PC-3 (cell line): ENCODE measurements at regions of chr14 and their contacts with region 1.

Region 1: DNA sequence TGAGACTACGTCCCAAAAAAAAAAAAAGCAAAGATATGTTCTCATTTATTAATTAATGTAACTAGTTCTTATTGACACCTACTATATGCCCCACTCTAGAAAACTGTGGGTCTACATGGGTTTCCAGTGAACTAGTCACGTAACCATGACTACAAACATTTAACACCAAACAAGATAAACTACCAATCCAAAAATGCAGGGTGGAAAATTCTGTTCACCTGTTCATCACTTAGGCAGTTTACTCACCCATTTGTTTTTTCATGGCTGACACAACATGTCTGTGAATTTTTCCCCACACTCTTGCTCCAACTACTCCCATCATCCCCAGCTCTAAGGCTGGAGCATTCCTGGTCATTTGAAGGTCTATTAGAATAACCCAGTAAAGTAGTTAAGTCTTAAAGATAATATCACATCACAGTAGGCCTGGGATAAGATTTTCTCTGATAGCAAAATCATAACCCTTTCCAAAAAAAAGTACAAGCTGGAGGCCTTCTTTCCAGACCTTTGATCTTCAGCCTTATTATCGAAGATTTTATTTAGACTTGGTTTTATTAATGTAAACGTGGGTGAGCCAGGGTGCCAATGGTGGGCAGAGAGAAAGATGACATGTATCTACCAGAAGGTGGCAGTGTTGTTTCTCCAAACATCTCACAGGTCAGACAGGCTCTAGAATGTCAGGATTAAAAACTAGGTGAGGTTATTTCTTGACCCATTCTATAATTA is 61.6 kb upstream of the DAAM1 start:
- DNase-seq: peak; percentile 95
- ATAC-seq: peak; percentile 94
- H3K4me3 ChIP-seq: no peak overlapping the region
- H3K27ac ChIP-seq: no peak overlapping the region
- H3K4me1 ChIP-seq: no peaks in the 10 kb centered on the region
- H3K27me3 ChIP-seq: peaks cover 4% of the 10 kb centered on the region; the same call in 1 of the 2 replicates
- CTCF ChIP-seq: peak; percentile 100

Region 2: DNA sequence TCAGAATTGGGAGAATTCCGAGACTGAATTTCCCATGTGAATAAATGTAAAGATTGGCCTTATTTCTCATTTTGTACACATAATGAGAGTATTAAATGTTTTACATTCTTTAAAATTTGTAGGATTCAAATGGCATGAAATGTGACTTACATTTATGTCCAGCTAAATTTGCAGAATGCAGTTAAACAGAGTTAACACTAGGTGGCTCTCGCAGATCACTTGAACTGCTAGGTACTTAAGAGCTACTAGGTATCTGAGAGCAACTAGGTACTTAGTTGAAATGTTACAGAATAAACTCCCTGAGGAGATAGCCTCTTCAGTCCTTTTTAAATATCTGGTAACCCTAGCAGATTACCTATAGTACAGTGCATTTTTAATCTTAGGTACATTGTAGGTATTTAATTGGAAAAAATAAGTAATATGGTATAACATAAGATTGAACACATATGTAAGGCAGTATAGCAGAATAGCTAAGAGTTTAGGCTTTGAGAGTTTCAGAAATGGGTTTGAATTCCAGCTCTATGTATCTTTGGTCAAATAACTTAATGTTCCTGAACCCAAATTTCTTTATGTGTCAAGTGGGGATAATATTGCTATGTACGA is 625.6 kb before region 1 on chr14:
- CTCF ChIA-PET with region 1: interaction called, 4 read pairs
- POLR2A ChIA-PET with region 1: no interaction called
- intact Hi-C with region 1: loop called (anchors 1 kb)
- DNase-seq: peak; percentile 97
- ATAC-seq: peak; percentile 99
- H3K4me3 ChIP-seq: no peak overlapping the region
- H3K27ac ChIP-seq: no peak overlapping the region
- H3K4me1 ChIP-seq: no peaks in the 10 kb centered on the region
- H3K27me3 ChIP-seq: no peaks in the 10 kb centered on the region
- CTCF ChIP-seq: peak; percentile 100

Region 3: DNA sequence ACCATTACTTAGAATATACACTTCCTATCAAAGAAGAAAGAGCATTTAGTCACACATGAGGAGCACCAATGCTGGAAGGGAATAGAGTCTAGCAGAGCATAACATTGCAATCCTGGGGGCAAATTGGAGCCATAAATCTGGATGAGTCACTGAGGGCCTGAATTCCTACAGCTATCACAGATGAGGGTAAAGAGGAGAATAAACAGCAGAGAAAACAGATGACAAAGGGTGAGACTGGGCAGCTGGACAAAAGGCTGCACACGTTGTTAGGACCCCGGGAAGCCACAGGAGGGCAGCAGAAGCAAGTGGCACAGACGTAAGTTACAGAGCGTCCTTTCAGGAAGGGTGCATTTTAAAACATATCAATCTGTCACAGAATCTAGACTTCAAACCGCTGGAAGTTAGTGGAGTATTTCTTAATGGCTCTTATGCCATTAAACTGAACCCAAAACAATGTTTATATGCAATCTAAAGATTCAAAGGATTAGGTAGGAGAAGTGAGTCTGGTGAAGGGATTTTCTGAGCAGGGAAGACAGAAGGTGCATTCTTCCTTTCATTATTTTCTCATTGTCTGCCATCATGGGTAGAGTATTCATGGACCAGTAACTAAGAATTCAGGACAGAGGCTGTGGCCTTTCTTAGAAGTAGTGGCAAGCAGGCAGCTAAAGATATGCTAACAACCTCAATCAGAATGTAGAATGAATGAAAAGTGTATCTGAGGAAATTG is 98.2 kb before region 1 on chr14:
- CTCF ChIA-PET with region 1: interaction called, 3 read pairs
- POLR2A ChIA-PET with region 1: no interaction called
- intact Hi-C with region 1: loop called (anchors 1 kb)
- DNase-seq: peak; percentile 100
- ATAC-seq: peak; percentile 98
- H3K4me3 ChIP-seq: peak overlapping the region; percentile 8; the same call in 1 of the 2 replicates
- H3K27ac ChIP-seq: no peak overlapping the region
- H3K4me1 ChIP-seq: peaks cover 16% of the 10 kb centered on the region
- H3K27me3 ChIP-seq: peaks cover 27% of the 10 kb centered on the region
- CTCF ChIP-seq: peak; percentile 100

Region 4: DNA sequence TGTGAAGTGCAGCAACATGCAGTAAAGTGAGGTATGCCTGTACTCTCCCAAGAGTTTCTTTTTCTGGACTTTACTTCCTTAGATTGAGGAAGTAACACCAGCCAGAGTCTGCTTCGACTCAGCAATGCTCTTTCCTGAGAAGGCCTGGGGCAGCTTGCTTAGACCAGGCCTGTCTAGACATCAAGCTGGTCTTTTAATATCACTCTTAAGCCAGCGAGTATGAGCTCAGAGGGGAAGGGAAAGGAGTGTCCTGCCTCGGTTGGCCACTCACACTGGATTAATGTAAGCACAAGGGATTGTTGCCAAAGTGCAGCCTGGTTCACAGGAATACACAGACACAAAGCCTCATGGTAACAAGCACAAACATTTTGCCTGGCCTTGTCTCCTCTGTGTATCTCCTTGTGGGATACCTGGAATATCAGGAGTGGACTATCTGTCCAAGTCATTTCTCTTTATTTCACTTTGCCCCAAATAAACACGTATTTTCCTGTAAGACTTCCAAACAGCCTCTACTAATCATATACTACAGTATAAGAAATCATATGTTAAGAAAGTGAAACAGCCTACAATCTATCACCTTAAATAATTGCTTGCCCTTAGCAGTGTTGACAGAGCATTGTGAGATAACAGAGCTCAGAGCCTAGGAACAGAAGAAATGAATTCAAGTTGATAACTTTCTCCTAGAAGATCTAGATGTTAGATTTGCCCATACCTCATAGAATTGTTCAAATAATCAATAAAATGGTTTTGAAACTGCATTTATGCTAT is 59.6 kb before region 1 on chr14:
- CTCF ChIA-PET with region 1: no interaction called
- POLR2A ChIA-PET with region 1: no interaction called
- intact Hi-C with region 1: no loop called
- DNase-seq: no peak
- ATAC-seq: no peak
- H3K4me3 ChIP-seq: no peak overlapping the region
- H3K27ac ChIP-seq: no peak overlapping the region
- H3K4me1 ChIP-seq: no peaks in the 10 kb centered on the region
- H3K27me3 ChIP-seq: peaks cover 74% of the 10 kb centered on the region
- CTCF ChIP-seq: no peak

Region 5: DNA sequence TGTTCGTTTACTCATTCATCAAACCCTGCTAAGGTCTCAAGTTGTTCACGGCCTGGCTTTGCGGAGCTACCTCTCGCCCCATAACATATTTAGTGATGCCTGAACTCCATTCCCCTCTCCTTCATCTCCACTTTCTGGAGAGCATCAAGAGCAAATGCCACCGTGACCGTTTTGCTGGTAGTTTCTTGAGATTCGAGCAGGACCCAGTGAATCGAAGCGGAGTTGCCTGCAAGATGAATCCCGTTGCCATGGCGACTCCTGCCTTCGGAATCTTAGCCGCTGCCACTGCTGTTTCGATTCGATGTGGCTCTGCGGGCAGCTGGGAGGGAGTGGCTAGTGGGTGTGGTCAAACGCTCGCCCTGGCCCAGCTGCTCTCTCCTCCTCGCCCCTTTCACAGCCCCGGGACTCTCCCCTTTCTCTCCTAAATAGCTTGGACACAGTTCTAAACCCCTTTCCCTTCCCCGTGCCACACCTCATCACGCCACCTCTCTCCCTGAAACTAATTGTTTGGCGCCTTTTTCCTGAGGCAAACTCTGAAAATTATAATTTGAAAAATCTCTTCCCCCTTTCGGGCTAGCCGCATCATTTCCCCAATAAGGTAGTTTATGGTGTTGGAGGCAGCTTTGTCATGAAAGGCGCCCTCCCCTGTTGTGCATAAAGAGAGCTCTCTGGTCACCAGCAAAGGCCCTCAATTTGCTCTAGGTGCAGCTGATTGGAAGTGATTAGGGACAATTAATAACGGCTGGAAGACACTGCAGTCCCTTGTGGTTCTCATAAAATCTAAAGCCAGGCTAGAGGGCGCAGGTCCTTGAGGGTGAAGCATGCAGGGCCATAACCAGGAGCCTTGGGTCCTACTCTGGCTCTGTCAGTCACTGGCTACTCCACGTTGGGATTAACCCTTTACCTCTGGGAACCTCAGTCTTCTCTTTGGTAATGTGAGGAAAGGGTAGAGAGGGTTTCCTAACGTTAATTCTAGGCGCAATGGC is 63.2 kb after region 1 on chr14:
- CTCF ChIA-PET with region 1: no interaction called
- POLR2A ChIA-PET with region 1: no interaction called
- intact Hi-C with region 1: loop called (anchors 2 kb)
- DNase-seq: peak; percentile 99
- ATAC-seq: peak; percentile 46
- H3K4me3 ChIP-seq: peak overlapping the region; percentile 79
- H3K27ac ChIP-seq: no peak overlapping the region
- H3K4me1 ChIP-seq: peaks cover 27% of the 10 kb centered on the region
- H3K27me3 ChIP-seq: peaks cover 18% of the 10 kb centered on the region
- CTCF ChIP-seq: peak; percentile 89

Region 6: DNA sequence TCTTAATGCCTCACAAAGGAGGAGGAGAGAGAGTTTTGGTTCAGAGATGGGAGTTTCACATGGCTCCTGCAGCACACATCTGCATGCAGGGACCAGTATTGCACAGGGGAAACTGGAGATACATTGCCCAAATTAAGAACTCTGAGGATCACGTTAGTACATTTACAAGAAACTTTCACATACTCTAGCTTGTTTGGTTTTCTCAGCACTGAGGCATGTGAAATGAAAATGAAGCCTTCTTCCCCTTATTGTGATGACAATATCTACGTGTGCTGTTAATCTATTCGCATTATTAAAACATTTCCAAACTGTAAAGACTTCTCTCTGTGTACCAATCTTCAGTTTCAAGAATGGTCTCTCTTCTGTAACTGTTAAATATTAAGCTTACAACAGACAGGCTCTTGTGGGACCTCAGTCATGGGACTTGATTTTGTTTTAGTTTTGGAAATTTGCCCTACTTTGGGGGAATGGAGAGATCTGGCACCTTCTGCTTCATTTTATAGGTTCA is 186.3 kb after region 1 on chr14:
- CTCF ChIA-PET with region 1: interaction called, 6 read pairs
- POLR2A ChIA-PET with region 1: no interaction called
- intact Hi-C with region 1: loop called (anchors 1 kb)
- DNase-seq: no peak
- ATAC-seq: no peak
- H3K4me3 ChIP-seq: no peak overlapping the region
- H3K27ac ChIP-seq: no peak overlapping the region
- H3K4me1 ChIP-seq: peaks cover 14% of the 10 kb centered on the region
- H3K27me3 ChIP-seq: no peaks in the 10 kb centered on the region
- CTCF ChIP-seq: no peak

Region 7: GRCh38 chr14:59428581-59429012 is 301.7 kb after region 1 on chr14:
- CTCF ChIA-PET with region 1: no interaction called
- POLR2A ChIA-PET with region 1: interaction called, 3 read pairs
- intact Hi-C with region 1: loop called (anchors 1 kb)
- DNase-seq: peak; percentile 54
- ATAC-seq: peak; percentile 51
- H3K4me3 ChIP-seq: no peak overlapping the region
- H3K27ac ChIP-seq: no peak overlapping the region
- H3K4me1 ChIP-seq: peaks cover 7% of the 10 kb centered on the region
- H3K27me3 ChIP-seq: no peaks in the 10 kb centered on the region
- CTCF ChIP-seq: peak; percentile 79

Region 8: GRCh38 chr14:59500732-59501131 is 373.9 kb after region 1 on chr14:
- CTCF ChIA-PET with region 1: interaction called, 11 read pairs
- POLR2A ChIA-PET with region 1: no interaction called
- intact Hi-C with region 1: no loop called
- DNase-seq: no peak
- ATAC-seq: peak; percentile 56
- H3K4me3 ChIP-seq: no peak overlapping the region
- H3K27ac ChIP-seq: no peak overlapping the region
- H3K4me1 ChIP-seq: no peaks in the 10 kb centered on the region
- H3K27me3 ChIP-seq: no peaks in the 10 kb centered on the region
- CTCF ChIP-seq: no peak